ENCODE measurements at regions of chr11 and their contacts with region 1.

Region 1: DNA sequence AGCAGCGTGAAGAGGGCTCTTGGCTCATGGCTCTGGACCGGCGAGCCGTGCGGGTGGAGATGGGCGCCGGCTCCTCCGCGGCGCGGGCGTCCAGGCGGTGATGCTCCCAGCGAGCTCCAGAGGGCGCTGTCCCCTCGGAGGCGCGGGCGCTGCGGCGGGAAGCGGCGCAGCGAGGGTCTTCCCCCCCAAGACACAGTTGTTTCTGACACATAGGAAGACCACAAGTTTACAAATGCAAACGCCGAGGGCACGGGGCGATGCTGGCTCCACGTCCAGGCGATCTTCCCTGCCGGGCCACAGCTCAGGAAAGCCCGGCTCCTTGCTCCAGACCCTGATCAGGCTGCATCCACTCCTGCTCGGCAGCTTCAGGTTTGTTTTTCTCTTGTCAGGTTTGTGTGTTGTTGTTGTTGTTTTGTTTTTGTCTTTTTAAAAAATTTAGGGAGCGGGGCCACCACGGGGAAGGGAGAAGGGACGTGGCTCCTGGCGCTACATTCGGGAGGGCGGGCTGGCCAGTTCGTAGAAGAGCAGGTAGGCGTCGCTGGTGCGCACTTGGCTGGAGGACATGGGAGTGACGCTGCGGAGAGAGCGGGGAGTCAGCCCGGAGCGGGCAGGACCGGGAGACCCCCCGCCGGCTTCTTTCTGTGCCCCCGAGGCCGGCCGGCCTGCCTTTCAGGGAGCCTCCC is 10.0 kb upstream of the MFRP start:
- DNase-seq: peak; percentile 91
- ATAC-seq: peak; percentile 80
- H3K4me3 Mint-ChIP-seq: peak overlapping the region; percentile 76
- H3K27ac Mint-ChIP-seq: peak overlapping the region; percentile 36
- H3K4me1 Mint-ChIP-seq: peaks cover 39% of the 10 kb centered on the region
- H3K27me3 Mint-ChIP-seq: peaks cover 19% of the 10 kb centered on the region
- CTCF ChIP-seq: peak; percentile 93

Region 2: GRCh38 chr11:119315131-119316015 is 41.1 kb before region 1 on chr11:
- CTCF ChIA-PET with region 1: interaction called, 30 read pairs
- POLR2A ChIA-PET with region 1: no interaction called
- DNase-seq: peak; percentile 74
- ATAC-seq: peak; percentile 29
- H3K4me3 Mint-ChIP-seq: peak overlapping the region; percentile 69
- H3K27ac Mint-ChIP-seq: no peak overlapping the region
- H3K4me1 Mint-ChIP-seq: peaks cover 37% of the 10 kb centered on the region
- H3K27me3 Mint-ChIP-seq: peaks cover 44% of the 10 kb centered on the region
- CTCF ChIP-seq: no peak

Region 3: DNA sequence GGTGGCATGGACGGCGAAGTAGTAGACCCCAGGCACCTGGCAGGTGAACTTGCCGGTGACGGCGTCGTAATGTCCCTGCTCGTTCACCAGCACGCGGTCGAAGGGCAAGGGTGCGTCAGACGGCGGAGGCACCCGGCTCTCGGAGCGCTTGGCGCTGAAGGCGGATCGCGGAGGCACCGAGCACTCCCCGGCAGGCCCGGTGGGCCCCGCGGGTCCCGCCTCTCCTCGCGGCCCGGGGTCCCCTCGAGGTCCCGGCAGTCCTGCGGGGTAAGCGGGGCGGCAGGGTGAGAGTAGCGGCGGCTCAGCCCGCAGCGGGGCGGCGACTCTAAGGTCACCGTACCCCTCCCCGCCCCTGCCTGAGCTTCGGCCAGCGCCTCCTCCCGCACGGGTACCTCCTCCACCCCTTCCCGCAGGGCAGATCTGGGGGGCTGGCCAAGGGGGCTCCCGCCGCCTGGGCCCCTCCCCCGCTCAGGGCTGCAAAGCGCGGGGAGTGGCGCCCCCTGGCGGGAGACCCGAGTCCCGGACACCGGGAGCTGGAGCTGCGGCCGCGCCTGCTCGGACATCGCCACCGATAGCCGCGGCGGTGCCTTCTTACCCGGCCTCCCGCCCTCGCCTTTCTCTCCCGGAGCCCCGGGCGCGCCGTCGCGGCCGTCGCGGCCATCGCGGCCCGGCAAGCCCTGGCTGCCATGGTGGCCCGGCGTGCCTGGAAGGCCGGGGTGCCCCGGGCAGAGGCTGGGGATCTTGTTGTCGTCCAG is 16.7 kb before region 1 on chr11:
- CTCF ChIA-PET with region 1: interaction called, 132 read pairs
- POLR2A ChIA-PET with region 1: interaction called, 10 read pairs
- DNase-seq: peak; percentile 85
- ATAC-seq: peak; percentile 12
- H3K4me3 Mint-ChIP-seq: peak overlapping the region; percentile 100
- H3K27ac Mint-ChIP-seq: no peak overlapping the region
- H3K4me1 Mint-ChIP-seq: peaks cover 52% of the 10 kb centered on the region
- H3K27me3 Mint-ChIP-seq: peaks cover 53% of the 10 kb centered on the region
- CTCF ChIP-seq: peak; percentile 97

Region 4: GRCh38 chr11:119381181-119381988 is 24.9 kb after region 1 on chr11 and contains the start of gene USP2:
- CTCF ChIA-PET with region 1: interaction called, 190 read pairs
- POLR2A ChIA-PET with region 1: interaction called, 5 read pairs
- DNase-seq: peak; percentile 98
- ATAC-seq: peak; percentile 83
- H3K4me3 Mint-ChIP-seq: no peak within 1 kb of the TSS
- H3K27ac Mint-ChIP-seq: peak within 1 kb of the TSS; percentile 12; the same call in 1 of the 2 replicates
- H3K4me1 Mint-ChIP-seq: peaks cover 40% of the 10 kb centered on the region
- H3K27me3 Mint-ChIP-seq: peaks cover 20% of the 10 kb centered on the region
- CTCF ChIP-seq: peak; percentile 24; the same call in 1 of the 2 replicates
- total RNA-seq, gene USP2: 7.3 to 8.2 TPM (median 8.0 TPM) in 3 replicates

Region 5: GRCh38 chr11:119460582-119460981 is 104.1 kb after region 1 on chr11:
- CTCF ChIA-PET with region 1: interaction called, 10 read pairs
- POLR2A ChIA-PET with region 1: no interaction called
- DNase-seq: no peak
- ATAC-seq: no peak
- H3K4me3 Mint-ChIP-seq: no peak overlapping the region
- H3K27ac Mint-ChIP-seq: no peak overlapping the region
- H3K4me1 Mint-ChIP-seq: peaks cover 38% of the 10 kb centered on the region
- H3K27me3 Mint-ChIP-seq: no peaks in the 10 kb centered on the region; the same call in 1 of the 2 replicates
- CTCF ChIP-seq: no peak

Measured in WTC11 (cell line).